MCF 10A (cell line): ENCODE measurements at regions of chr14 and their contacts with region 1.

Region 1: GRCh38 chr14:36604757-36605505 is 22.5 kb upstream of the NKX2-8 start:
- DNase-seq: peak; percentile 90
- H3K4me3 Mint-ChIP-seq: no peak overlapping the region
- H3K27ac Mint-ChIP-seq: no peak overlapping the region
- H3K4me1 Mint-ChIP-seq: peaks cover 12% of the 10 kb centered on the region
- H3K27me3 Mint-ChIP-seq: no peaks in the 10 kb centered on the region
- CTCF ChIP-seq: peak; percentile 63

Region 2: DNA sequence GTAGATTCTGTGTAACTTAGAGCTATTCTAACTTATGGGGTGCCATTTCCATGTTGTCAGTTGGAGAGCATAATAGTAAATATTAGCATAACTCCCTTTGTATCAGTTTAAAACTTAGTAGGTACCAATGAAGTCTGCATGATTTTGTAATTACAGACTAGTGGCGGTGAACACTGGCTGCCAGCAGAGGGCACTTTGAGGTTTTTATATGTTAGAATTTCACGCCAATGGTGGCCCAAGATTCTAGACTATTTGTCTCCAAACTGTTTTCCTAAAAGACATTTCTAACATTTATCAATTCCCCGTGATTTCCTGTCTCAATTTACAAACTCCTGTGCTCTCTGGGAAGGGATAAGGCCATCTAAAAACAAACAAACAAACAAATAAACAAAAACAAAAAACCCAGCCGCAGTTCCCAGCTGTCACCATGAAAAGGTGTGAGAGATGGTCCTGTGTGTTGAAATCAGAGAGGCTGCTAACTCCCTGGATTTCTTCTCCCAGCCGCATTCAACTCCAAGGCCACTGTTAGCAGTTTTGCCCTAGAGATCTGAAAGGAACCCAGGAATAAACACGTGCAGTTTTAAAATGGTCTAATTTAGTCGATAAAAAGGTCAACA is 721.1 kb before region 1 on chr14:
- CTCF ChIA-PET with region 1: interaction called, 10 read pairs
- POLR2A ChIA-PET with region 1: no interaction called
- intact Hi-C with region 1: loop called (anchors 1 kb)
- DNase-seq: peak; percentile 41
- H3K4me3 Mint-ChIP-seq: no peak overlapping the region
- H3K27ac Mint-ChIP-seq: no peak overlapping the region
- H3K4me1 Mint-ChIP-seq: peaks cover 14% of the 10 kb centered on the region
- H3K27me3 Mint-ChIP-seq: no peaks in the 10 kb centered on the region
- CTCF ChIP-seq: peak; percentile 66

Region 3: GRCh38 chr14:36105401-36105800 is 499.5 kb before region 1 on chr14:
- CTCF ChIA-PET with region 1: interaction called, 3 read pairs
- POLR2A ChIA-PET with region 1: no interaction called
- intact Hi-C with region 1: loop called (anchors 1 kb)
- DNase-seq: peak; percentile 58
- H3K4me3 Mint-ChIP-seq: no peak overlapping the region
- H3K27ac Mint-ChIP-seq: no peak overlapping the region
- H3K4me1 Mint-ChIP-seq: no peaks in the 10 kb centered on the region
- H3K27me3 Mint-ChIP-seq: peaks cover 2% of the 10 kb centered on the region
- CTCF ChIP-seq: no peak

Region 4: GRCh38 chr14:36383674-36384431 is 221.1 kb before region 1 on chr14:
- CTCF ChIA-PET with region 1: no interaction called
- POLR2A ChIA-PET with region 1: no interaction called
- intact Hi-C with region 1: loop called (anchors 10 kb)
- DNase-seq: no peak
- H3K4me3 Mint-ChIP-seq: no peak overlapping the region
- H3K27ac Mint-ChIP-seq: no peak overlapping the region
- H3K4me1 Mint-ChIP-seq: peaks cover 11% of the 10 kb centered on the region
- H3K27me3 Mint-ChIP-seq: no peaks in the 10 kb centered on the region
- CTCF ChIP-seq: no peak

Region 5: DNA sequence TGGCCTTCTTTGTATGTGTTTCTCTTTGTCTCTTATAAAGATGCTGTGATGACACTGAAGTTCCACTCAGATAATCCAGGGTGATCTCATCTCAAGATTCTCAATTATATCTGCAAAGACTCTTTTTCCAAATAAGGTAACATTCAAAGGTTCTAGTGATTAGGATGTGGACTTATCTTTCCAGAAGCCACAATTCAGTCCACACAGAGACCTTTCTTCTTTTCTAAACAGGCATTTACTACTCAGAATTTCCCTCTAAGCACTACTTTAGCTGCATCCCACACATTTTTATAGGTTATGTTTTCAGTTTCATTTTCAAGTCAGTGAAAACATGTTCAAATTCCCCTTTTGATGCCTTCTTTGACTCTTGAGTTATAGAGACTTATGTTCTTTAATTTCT is 75.9 kb before region 1 on chr14:
- CTCF ChIA-PET with region 1: no interaction called
- POLR2A ChIA-PET with region 1: no interaction called
- intact Hi-C with region 1: no loop called
- DNase-seq: no peak
- H3K4me3 Mint-ChIP-seq: no peak overlapping the region
- H3K27ac Mint-ChIP-seq: no peak overlapping the region
- H3K4me1 Mint-ChIP-seq: peaks cover 5% of the 10 kb centered on the region
- H3K27me3 Mint-ChIP-seq: peaks cover 79% of the 10 kb centered on the region
- CTCF ChIP-seq: no peak

Region 6: DNA sequence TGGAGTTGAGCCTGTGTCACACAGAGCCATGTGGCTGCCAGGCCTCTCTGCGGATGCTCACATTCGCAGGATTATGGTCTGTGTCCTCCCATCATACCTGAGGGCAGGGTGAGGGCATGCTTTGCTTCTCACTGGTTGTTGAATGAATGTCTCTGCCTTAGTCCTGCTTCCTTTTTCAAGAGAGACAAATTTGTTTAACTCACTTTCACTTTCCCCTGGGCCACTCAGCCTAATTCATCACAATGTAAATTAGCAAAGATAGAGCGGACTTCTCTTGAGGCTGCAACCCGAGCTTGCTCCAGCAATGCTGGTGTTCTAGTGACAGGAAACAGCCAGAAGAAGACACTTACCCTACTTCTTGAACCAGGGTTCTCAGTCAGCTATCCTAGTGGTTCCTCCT is 21.2 kb after region 1 on chr14:
- CTCF ChIA-PET with region 1: interaction called, 15 read pairs
- POLR2A ChIA-PET with region 1: interaction called, 3 read pairs
- intact Hi-C with region 1: no loop called
- DNase-seq: no peak
- H3K4me3 Mint-ChIP-seq: no peak overlapping the region
- H3K27ac Mint-ChIP-seq: no peak overlapping the region
- H3K4me1 Mint-ChIP-seq: peaks cover 11% of the 10 kb centered on the region
- H3K27me3 Mint-ChIP-seq: no peaks in the 10 kb centered on the region
- CTCF ChIP-seq: no peak